ENCODE measurements at regions of chr6 and their contacts with region 1.

Region 1: GRCh38 chr6:144343701-144344428 is 58.7 kb downstream of the UTRN start:
- DNase-seq: peak; percentile 63
- H3K4me3 Mint-ChIP-seq: peak overlapping the region; percentile 88
- H3K27ac Mint-ChIP-seq: peak overlapping the region; percentile 99
- H3K4me1 Mint-ChIP-seq: peaks cover 67% of the 10 kb centered on the region
- H3K27me3 Mint-ChIP-seq: no peaks in the 10 kb centered on the region

Region 2: GRCh38 chr6:144095331-144096002 is 248.4 kb before region 1 on chr6 and contains the start of gene SF3B5:
- CTCF ChIA-PET with region 1: no interaction called
- intact Hi-C with region 1: loop called (anchors 1 kb)
- DNase-seq: peak; percentile 99
- H3K4me3 Mint-ChIP-seq: peak within 1 kb of the TSS; percentile 91
- H3K27ac Mint-ChIP-seq: peak within 1 kb of the TSS; percentile 91
- H3K4me1 Mint-ChIP-seq: peaks cover 29% of the 10 kb centered on the region
- H3K27me3 Mint-ChIP-seq: no peaks in the 10 kb centered on the region
- total RNA-seq, gene SF3B5: 170 to 176 TPM

Region 3: GRCh38 chr6:144215932-144216667 is 127.8 kb before region 1 on chr6:
- CTCF ChIA-PET with region 1: no interaction called
- intact Hi-C with region 1: loop called (anchors 1 kb)
- DNase-seq: peak; percentile 93
- H3K4me3 Mint-ChIP-seq: peak overlapping the region; percentile 79
- H3K27ac Mint-ChIP-seq: peak overlapping the region; percentile 96
- H3K4me1 Mint-ChIP-seq: peaks cover 31% of the 10 kb centered on the region
- H3K27me3 Mint-ChIP-seq: peaks cover 2% of the 10 kb centered on the region

Region 4: GRCh38 chr6:144310765-144311164 is 33.1 kb before region 1 on chr6:
- CTCF ChIA-PET with region 1: interaction called, 3 read pairs
- intact Hi-C with region 1: loop called (anchors 2 kb)
- DNase-seq: peak; percentile 47
- H3K4me3 Mint-ChIP-seq: no peak overlapping the region
- H3K27ac Mint-ChIP-seq: no peak overlapping the region
- H3K4me1 Mint-ChIP-seq: peaks cover 12% of the 10 kb centered on the region
- H3K27me3 Mint-ChIP-seq: no peaks in the 10 kb centered on the region

Region 5: DNA sequence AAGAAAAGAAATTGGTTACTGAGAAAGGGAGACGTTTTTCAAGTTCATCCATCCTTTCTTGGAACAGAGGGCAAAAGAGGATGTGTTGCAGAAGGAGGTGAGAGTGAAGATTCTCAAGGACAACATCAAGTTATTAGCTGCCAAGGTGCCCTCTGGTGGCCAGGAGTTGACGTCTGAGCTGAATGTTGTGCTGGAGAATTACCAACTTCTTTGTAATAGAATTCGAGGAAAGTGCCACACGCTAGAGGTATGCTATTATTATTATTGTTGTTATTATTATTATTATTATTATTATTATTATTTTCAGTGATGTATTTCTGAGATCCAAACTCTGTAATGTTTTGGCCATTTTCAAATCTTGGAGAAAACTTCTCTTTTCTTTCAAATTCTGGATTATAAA is 138.3 kb after region 1 on chr6:
- CTCF ChIA-PET with region 1: no interaction called
- intact Hi-C with region 1: loop called (anchors 2 kb)
- DNase-seq: peak; percentile 88
- H3K4me3 Mint-ChIP-seq: no peak overlapping the region
- H3K27ac Mint-ChIP-seq: no peak overlapping the region
- H3K4me1 Mint-ChIP-seq: peaks cover 3% of the 10 kb centered on the region
- H3K27me3 Mint-ChIP-seq: no peaks in the 10 kb centered on the region

Region 6: DNA sequence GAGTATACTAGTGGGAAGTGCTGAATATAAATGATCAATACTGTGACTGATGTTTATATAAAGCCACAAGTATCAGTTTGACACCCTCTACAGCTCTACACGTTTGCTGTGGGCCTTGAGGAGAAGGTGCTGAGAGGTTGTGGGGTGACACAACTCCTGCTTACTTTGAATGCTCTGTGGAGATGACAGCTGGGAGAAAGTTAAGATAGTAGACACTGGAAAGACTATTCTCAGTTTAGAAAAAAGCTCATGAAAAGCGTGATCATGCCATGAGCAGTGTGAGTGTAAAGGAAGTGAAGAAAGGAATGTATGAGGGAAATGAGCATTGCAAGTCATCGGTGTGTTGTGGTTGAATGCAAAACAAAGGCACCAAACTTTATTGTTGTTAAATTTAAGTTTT is 157.0 kb after region 1 on chr6:
- CTCF ChIA-PET with region 1: no interaction called
- intact Hi-C with region 1: no loop called
- DNase-seq: no peak
- H3K4me3 Mint-ChIP-seq: no peak overlapping the region
- H3K27ac Mint-ChIP-seq: no peak overlapping the region
- H3K4me1 Mint-ChIP-seq: peaks cover 13% of the 10 kb centered on the region
- H3K27me3 Mint-ChIP-seq: no peaks in the 10 kb centered on the region

Region 7: GRCh38 chr6:144659202-144660182 is 315.6 kb after region 1 on chr6:
- CTCF ChIA-PET with region 1: no interaction called
- intact Hi-C with region 1: loop called (anchors 5 kb)
- DNase-seq: peak; percentile 23
- H3K4me3 Mint-ChIP-seq: no peak overlapping the region
- H3K27ac Mint-ChIP-seq: peak overlapping the region; percentile 50
- H3K4me1 Mint-ChIP-seq: peaks cover 52% of the 10 kb centered on the region
- H3K27me3 Mint-ChIP-seq: no peaks in the 10 kb centered on the region

Measured in activated naive CD4-positive, alpha-beta T cell treated with anti-CD3 and anti-CD28 coated beads for 36 hours (primary cell).